ENCODE measurements at regions of chr9 and their contacts with region 1.

Region 1: GRCh38 chr9:91433180-91433579 is 9.5 kb upstream of the NFIL3 start:
- DNase-seq: peak in 2 of 3 donors; percentile 47 to 58
- H3K4me3 ChIP-seq: no peak overlapping the region
- H3K4me3 Mint-ChIP-seq: no peak overlapping the region
- H3K27ac ChIP-seq: no peak overlapping the region
- H3K27ac Mint-ChIP-seq: no peak overlapping the region
- H3K4me1 ChIP-seq: peaks cover 16 to 17% of the 10 kb centered on the region in 2 donors
- H3K4me1 Mint-ChIP-seq: peaks cover 21% of the 10 kb centered on the region
- H3K27me3 ChIP-seq: no peaks in the 10 kb centered on the region
- H3K27me3 Mint-ChIP-seq: peaks cover 0 to 4% (median under 1%) of the 10 kb centered on the region in 3 donors
- CTCF ChIP-seq: peak; percentile 57

Region 2: GRCh38 chr9:91036826-91037510 is 396.2 kb before region 1 on chr9:
- intact Hi-C with region 1: loop called (anchors 5 to 10 kb)
- DNase-seq: peak; percentile 67 to 81 (median 68)
- H3K4me3 ChIP-seq: no peak overlapping the region
- H3K4me3 Mint-ChIP-seq: peak overlapping the region; percentile 39 to 78
- H3K27ac ChIP-seq: no peak overlapping the region
- H3K27ac Mint-ChIP-seq: peak overlapping the region in 2 of 7 donors; percentile 20 to 61
- H3K4me1 ChIP-seq: peaks cover 10 to 11% of the 10 kb centered on the region in 2 donors
- H3K4me1 Mint-ChIP-seq: peaks cover 17% of the 10 kb centered on the region
- H3K27me3 ChIP-seq: peaks cover 0 to 3% of the 10 kb centered on the region in 2 donors
- H3K27me3 Mint-ChIP-seq: peaks cover 5 to 14% (median 13%) of the 10 kb centered on the region in 3 donors
- CTCF ChIP-seq: peak; percentile 64

Region 3: DNA sequence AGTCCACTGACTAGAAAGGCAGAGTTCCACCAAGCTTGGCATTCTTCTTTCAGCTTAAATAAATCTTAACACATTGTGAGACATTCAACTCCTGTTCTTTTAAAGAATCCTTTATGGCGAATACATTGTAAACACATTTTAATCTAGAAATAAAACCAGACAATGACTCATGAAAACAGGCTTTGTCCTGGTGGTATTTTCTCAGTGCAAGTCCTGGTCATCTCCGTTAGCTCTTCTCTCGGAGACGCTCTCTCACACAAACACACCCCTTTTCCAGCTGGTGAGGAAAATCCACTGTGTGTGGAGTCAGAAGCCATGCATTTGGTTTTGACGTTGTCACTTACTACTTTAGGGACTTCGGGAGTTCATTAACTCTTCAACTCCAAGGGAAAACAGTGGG is 211.8 kb before region 1 on chr9:
- intact Hi-C with region 1: no loop called
- DNase-seq: no peak
- H3K4me3 ChIP-seq: no peak overlapping the region
- H3K4me3 Mint-ChIP-seq: no peak overlapping the region
- H3K27ac ChIP-seq: no peak overlapping the region
- H3K27ac Mint-ChIP-seq: no peak overlapping the region
- H3K4me1 ChIP-seq: no peaks in the 10 kb centered on the region
- H3K4me1 Mint-ChIP-seq: no peaks in the 10 kb centered on the region
- H3K27me3 ChIP-seq: no peaks in the 10 kb centered on the region
- H3K27me3 Mint-ChIP-seq: no peaks in the 10 kb centered on the region
- CTCF ChIP-seq: no peak

Region 4: GRCh38 chr9:91465420-91465819 is 32.2 kb after region 1 on chr9:
- intact Hi-C with region 1: no loop called
- DNase-seq: no peak
- H3K4me3 ChIP-seq: no peak overlapping the region
- H3K4me3 Mint-ChIP-seq: no peak overlapping the region
- H3K27ac ChIP-seq: no peak overlapping the region
- H3K27ac Mint-ChIP-seq: no peak overlapping the region
- H3K4me1 ChIP-seq: no peaks in the 10 kb centered on the region
- H3K4me1 Mint-ChIP-seq: no peaks in the 10 kb centered on the region
- H3K27me3 ChIP-seq: no peaks in the 10 kb centered on the region
- H3K27me3 Mint-ChIP-seq: peaks cover 0 to 7% (median 1%) of the 10 kb centered on the region in 3 donors
- CTCF ChIP-seq: no peak

Region 5: DNA sequence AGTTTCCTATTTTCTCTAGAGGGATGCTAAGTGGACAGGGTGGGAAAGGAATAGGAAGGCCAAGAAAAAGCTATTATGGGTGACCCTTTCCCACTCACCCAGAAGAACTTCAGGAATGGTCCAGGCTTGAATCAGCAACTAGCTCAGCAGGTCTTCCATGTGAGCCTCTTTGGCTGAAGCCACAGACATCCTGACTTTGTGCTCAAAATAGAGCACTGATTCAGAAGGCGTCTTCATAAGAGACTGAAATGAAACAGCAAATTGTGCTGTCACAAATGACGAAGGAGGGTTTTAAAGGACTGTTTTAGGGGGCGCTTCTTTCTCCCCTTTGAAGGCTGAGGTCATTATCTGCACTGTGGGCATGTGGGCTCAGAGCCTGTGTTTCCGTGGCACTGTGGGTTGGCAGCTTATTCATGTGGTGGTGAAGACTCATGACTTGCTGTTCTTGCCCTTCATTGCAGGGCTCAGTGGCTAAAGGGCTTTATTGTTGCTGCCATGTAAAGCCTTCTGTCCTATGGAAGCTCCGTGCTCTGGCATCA is 56.2 kb after region 1 on chr9:
- intact Hi-C with region 1: no loop called
- DNase-seq: no peak
- H3K4me3 ChIP-seq: no peak overlapping the region
- H3K4me3 Mint-ChIP-seq: no peak overlapping the region
- H3K27ac ChIP-seq: no peak overlapping the region
- H3K27ac Mint-ChIP-seq: no peak overlapping the region
- H3K4me1 ChIP-seq: no peaks in the 10 kb centered on the region
- H3K4me1 Mint-ChIP-seq: no peaks in the 10 kb centered on the region
- H3K27me3 ChIP-seq: peaks cover 0 to 2% of the 10 kb centered on the region in 2 donors
- H3K27me3 Mint-ChIP-seq: peaks cover 1 to 11% (median 6%) of the 10 kb centered on the region in 3 donors
- CTCF ChIP-seq: no peak

Measured in CD14-positive monocyte (primary cell).